ENCODE measurements at regions of chr21 and their contacts with region 1.

Region 1: DNA sequence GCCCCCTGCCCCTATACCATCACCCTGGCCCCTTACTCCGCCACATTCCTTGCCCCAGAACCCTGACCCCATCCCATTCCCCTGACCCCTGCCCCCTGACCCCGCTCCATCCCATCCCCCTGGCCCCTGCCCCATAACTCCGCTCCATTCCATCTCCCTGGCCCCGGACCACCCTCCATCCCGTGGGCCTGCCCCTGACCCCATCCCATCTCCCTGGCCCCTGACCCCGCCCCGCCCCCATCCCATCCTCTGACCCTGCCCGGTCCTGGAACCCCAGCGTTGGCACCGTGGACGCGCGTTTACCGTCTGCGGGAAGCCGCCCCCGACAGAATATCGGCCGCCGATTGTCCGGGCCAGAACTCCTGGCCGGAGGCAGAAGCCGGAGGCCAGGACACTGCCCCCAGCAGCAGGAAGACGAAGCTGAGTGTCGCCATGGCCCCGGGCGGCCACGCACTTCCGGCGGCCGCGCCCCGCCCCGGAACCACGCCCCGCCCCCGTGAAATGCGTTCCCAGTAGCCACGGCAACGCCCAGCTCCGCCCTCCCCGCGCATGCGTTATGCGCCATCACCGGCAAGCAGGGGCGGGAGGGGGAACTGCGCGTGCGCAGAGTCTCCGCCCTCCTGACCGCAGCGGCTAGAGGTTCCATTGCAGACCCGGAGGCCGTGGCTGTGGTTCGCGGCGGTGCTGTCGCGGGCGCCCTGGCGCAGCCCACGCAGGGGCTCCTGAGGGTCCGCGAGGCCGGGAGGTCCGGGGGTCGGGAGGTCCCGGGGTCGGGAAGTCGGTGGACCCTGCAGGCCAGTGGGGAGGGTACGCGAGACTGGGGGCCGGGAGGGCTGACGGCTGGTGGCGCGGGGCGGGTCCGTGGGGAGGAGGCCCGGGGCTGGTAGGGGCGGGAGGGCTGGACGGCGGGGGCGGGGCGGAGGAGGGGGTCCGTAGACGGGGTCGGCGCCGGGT is at the start of gene POFUT2:
- DNase-seq: peak; percentile 97 to 100 (median 99)
- ATAC-seq: peak; percentile 77
- H3K4me3 ChIP-seq: peak within 1 kb of the TSS; percentile 69
- H3K4me3 Mint-ChIP-seq: peak within 1 kb of the TSS; percentile 98
- H3K27ac ChIP-seq: peak within 1 kb of the TSS; percentile 53 to 57
- H3K27ac Mint-ChIP-seq: peak within 1 kb of the TSS; percentile 92
- H3K4me1 ChIP-seq: peaks cover 37% of the 10 kb centered on the region
- H3K4me1 Mint-ChIP-seq: peaks cover 40% of the 10 kb centered on the region
- H3K27me3 ChIP-seq: no peaks in the 10 kb centered on the region
- H3K27me3 Mint-ChIP-seq: no peaks in the 10 kb centered on the region
- CTCF ChIP-seq: no peak
- total RNA-seq, gene POFUT2: 56.6 to 57.2 TPM

Region 2: DNA sequence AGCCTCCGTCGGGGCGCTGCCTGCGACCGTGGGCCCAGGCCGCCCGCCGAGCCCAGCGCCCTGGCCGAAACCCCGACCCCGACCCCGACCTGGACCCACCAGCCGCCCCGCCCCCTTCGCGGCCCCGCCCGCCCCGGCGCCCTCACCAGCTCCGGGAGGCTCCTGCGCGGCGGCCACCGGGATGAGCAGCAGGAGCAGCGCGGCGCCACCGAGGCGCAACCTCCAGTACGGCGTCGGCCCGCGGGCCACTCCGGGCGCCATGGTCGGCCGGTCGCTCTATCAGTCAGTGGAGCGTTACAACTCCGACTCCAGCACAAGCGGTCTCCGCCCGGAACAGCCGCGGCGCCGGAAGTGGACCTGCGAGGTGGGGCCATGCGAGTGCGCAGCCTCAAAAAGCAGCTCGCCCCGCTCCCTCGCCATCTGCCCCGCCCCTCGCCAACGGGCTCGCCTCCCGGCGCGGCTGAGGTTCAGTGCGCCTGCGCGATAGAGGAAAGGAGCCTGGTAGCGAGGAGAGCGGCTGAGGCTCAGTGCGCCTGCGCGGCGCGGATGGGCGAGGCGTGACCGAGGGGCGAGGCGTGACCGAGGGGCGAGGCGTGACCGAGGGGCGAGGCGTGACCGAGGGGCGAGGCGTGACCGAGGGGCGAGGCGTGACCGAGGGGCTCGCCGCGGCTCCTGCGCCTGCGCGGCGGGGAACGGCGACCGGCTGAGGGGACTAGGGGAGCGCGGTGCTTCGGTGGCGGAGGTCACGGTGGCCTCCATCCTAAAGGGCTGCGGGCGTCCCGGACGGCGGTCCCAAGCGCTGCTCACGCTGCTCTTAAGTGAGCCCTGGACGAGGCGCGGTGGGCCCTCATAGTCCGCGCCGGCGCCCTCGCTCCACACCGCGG is 414.1 kb before region 1 on chr21 and contains the start of gene PTTG1IP:
- CTCF ChIA-PET with region 1: no interaction called
- POLR2A ChIA-PET with region 1: no interaction called
- intact Hi-C with region 1: loop called in 1 of 2 experiments (anchors 10 kb)
- DNase-seq: peak; percentile 98 to 100 (median 99)
- ATAC-seq: peak; percentile 76
- H3K4me3 ChIP-seq: peak within 1 kb of the TSS; percentile 76
- H3K4me3 Mint-ChIP-seq: peak within 1 kb of the TSS; percentile 97
- H3K27ac ChIP-seq: peak within 1 kb of the TSS; percentile 78 to 81
- H3K27ac Mint-ChIP-seq: peak within 1 kb of the TSS; percentile 92
- H3K4me1 ChIP-seq: peaks cover 62% of the 10 kb centered on the region
- H3K4me1 Mint-ChIP-seq: peaks cover 60% of the 10 kb centered on the region
- H3K27me3 ChIP-seq: no peaks in the 10 kb centered on the region
- H3K27me3 Mint-ChIP-seq: no peaks in the 10 kb centered on the region
- CTCF ChIP-seq: no peak
- total RNA-seq, gene PTTG1IP: 99.0 to 99.5 TPM

Region 3: DNA sequence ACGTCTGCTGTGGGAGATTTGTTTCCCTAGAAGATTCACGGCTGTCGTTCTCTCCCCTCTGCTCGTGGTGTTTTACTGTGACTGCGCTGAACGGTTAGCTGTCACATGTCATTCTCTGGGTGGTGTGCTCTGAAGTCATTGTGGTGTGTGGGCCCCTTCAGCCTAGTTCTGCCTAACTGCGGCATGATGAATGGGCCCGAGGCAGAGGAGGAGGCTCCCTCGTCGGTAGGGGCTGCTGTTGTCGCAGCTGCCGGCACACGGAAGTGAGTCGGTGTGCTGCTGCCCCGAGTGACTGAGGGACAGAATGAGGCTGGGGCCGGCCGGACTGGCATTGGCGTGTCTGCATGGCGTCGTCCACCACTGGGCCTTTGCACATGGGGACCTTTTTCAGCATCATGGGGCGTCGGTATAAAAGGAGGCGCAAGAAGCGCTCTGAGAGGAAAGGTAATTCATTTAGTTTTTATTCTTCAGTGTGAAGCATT is 135.4 kb before region 1 on chr21:
- CTCF ChIA-PET with region 1: interaction called, 6 read pairs
- POLR2A ChIA-PET with region 1: no interaction called
- intact Hi-C with region 1: loop called (anchors 2 to 5 kb)
- DNase-seq: peak; percentile 36 to 85 (median 61)
- ATAC-seq: peak; percentile 85
- H3K4me3 ChIP-seq: no peak overlapping the region
- H3K4me3 Mint-ChIP-seq: peak overlapping the region; percentile 46
- H3K27ac ChIP-seq: no peak overlapping the region
- H3K27ac Mint-ChIP-seq: peak overlapping the region; percentile 73
- H3K4me1 ChIP-seq: peaks cover 31% of the 10 kb centered on the region
- H3K4me1 Mint-ChIP-seq: peaks cover 52% of the 10 kb centered on the region
- H3K27me3 ChIP-seq: no peaks in the 10 kb centered on the region
- H3K27me3 Mint-ChIP-seq: no peaks in the 10 kb centered on the region
- CTCF ChIP-seq: peak; percentile 69

Region 4: DNA sequence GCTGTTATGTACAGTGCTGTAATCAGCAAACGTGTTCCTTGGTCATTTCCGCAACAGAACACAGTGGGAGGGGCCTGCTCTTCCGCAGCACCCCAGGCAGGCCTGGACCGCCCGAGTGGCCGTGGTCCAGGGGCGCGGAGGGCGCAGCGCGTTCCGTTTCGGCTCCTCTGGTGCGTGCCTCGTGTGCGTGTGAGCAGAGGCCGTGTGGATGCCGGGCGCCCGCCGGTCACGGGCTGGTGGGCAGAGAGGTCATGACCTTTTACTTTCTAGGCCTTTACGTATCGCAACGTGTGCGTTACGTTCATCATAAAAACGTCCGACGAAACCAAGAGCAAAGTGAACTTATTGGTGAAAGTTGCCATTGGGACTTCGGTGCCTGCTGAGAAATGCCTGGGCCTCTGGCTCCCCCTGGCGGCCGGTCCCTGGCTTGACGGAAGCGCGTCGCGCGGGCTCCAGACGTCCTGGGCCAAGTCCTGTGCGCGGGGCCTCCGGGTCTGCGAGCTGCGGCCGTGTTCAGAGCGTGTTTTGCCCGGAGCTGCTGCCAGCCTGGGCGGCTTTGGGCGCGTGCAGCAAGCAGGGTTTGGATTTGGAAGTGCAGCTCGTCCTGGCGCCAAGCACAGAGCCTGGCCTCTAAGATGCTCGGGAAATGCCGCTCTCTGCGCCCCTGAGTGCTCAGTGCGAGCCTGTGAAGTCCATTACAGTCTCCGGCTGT is 151.6 kb after region 1 on chr21:
- CTCF ChIA-PET with region 1: interaction called, 8 read pairs
- POLR2A ChIA-PET with region 1: interaction called, 5 read pairs
- intact Hi-C with region 1: loop called (anchors 1 kb)
- DNase-seq: peak; percentile 73 to 92 (median 84)
- ATAC-seq: peak; percentile 85
- H3K4me3 ChIP-seq: peak overlapping the region; percentile 38
- H3K4me3 Mint-ChIP-seq: peak overlapping the region; percentile 74
- H3K27ac ChIP-seq: no peak overlapping the region
- H3K27ac Mint-ChIP-seq: peak overlapping the region; percentile 73
- H3K4me1 ChIP-seq: peaks cover 21% of the 10 kb centered on the region
- H3K4me1 Mint-ChIP-seq: peaks cover 21% of the 10 kb centered on the region
- H3K27me3 ChIP-seq: peaks cover 0 to 2% of the 10 kb centered on the region in 2 experiments
- H3K27me3 Mint-ChIP-seq: peaks cover 8% of the 10 kb centered on the region
- CTCF ChIP-seq: peak; percentile 91

Region 5: GRCh38 chr21:45596704-45597318 is 309.1 kb after region 1 on chr21:
- CTCF ChIA-PET with region 1: interaction called, 3 read pairs
- POLR2A ChIA-PET with region 1: interaction called, 3 read pairs
- intact Hi-C with region 1: loop called in 1 of 2 experiments (anchors 1 kb)
- DNase-seq: peak; percentile 79 to 93 (median 84)
- ATAC-seq: peak; percentile 65
- H3K4me3 ChIP-seq: no peak overlapping the region
- H3K4me3 Mint-ChIP-seq: no peak overlapping the region
- H3K27ac ChIP-seq: no peak overlapping the region
- H3K27ac Mint-ChIP-seq: peak overlapping the region; percentile 67
- H3K4me1 ChIP-seq: peaks cover 26% of the 10 kb centered on the region
- H3K4me1 Mint-ChIP-seq: peaks cover 19% of the 10 kb centered on the region
- H3K27me3 ChIP-seq: no peaks in the 10 kb centered on the region
- H3K27me3 Mint-ChIP-seq: no peaks in the 10 kb centered on the region
- CTCF ChIP-seq: peak; percentile 87

Region 6: GRCh38 chr21:45788637-45789506 is 501.2 kb after region 1 on chr21:
- CTCF ChIA-PET with region 1: no interaction called
- POLR2A ChIA-PET with region 1: no interaction called
- intact Hi-C with region 1: no loop called
- DNase-seq: no peak
- ATAC-seq: no peak
- H3K4me3 ChIP-seq: no peak overlapping the region
- H3K4me3 Mint-ChIP-seq: no peak overlapping the region
- H3K27ac ChIP-seq: no peak overlapping the region
- H3K27ac Mint-ChIP-seq: no peak overlapping the region
- H3K4me1 ChIP-seq: no peaks in the 10 kb centered on the region
- H3K4me1 Mint-ChIP-seq: no peaks in the 10 kb centered on the region
- H3K27me3 ChIP-seq: no peaks in the 10 kb centered on the region
- H3K27me3 Mint-ChIP-seq: no peaks in the 10 kb centered on the region
- CTCF ChIP-seq: no peak

Region 7: GRCh38 chr21:45820171-45821091 is 532.7 kb after region 1 on chr21:
- CTCF ChIA-PET with region 1: no interaction called
- POLR2A ChIA-PET with region 1: no interaction called
- intact Hi-C with region 1: loop called (anchors 1 to 2 kb)
- DNase-seq: peak; percentile 73 to 90 (median 76)
- ATAC-seq: peak; percentile 66
- H3K4me3 ChIP-seq: no peak overlapping the region
- H3K4me3 Mint-ChIP-seq: no peak overlapping the region
- H3K27ac ChIP-seq: no peak overlapping the region
- H3K27ac Mint-ChIP-seq: peak overlapping the region; percentile 28
- H3K4me1 ChIP-seq: peaks cover 17% of the 10 kb centered on the region
- H3K4me1 Mint-ChIP-seq: peaks cover 25% of the 10 kb centered on the region
- H3K27me3 ChIP-seq: no peaks in the 10 kb centered on the region
- H3K27me3 Mint-ChIP-seq: no peaks in the 10 kb centered on the region
- CTCF ChIP-seq: peak; percentile 91

Region 8: DNA sequence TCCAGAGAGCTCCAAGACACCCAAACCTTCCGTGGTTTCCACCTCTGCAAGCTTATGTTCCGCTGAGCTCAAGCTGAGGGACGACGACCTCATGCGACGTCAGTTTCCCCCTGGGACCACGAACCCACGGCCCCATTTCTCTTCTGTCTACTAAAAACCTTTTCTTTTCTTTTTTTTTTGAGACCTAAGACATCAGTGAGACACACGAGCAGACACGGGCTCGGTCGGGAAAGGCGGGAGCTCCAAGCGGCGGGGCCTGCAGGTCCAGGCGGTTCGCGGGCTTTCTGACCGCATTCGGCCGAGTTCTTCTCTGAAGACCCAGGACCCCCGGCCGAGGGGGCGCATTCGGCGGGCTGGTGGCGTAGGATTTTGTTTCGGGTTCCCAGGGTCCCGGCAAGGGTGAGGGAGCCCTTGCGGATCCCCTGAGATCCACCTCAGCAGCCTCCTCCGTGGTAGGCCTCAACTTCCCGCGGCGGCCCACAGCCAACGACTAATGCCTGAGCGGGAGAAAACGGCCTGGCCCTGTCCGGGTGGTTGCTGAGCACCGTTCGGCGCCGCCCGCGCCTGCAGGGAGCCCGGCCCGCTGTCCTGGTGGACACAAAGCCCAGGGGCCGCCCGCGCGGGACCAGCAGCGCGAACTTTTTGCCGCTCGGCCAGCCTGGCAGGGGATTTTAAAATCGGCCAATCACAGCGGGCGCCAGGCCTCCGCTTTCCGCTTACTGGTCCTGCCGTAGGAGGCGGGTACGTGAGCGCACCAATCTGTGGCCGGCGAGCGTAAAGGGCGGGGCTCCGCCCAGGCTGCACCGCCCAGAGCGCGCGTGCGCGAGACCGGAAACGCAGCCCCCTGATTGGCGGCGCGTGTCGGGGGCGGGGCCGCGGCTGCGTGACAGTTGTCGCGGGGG is 1035.8 kb after region 1 on chr21 and contains the start of gene C21orf58:
- CTCF ChIA-PET with region 1: no interaction called
- POLR2A ChIA-PET with region 1: no interaction called
- intact Hi-C with region 1: loop called in 1 of 2 experiments (anchors 10 kb)
- DNase-seq: peak; percentile 95 to 99 (median 98)
- ATAC-seq: peak; percentile 81
- H3K4me3 ChIP-seq: peak within 1 kb of the TSS; percentile 96
- H3K4me3 Mint-ChIP-seq: peak within 1 kb of the TSS; percentile 96
- H3K27ac ChIP-seq: peak within 1 kb of the TSS; percentile 96 to 100
- H3K27ac Mint-ChIP-seq: peak within 1 kb of the TSS; percentile 99
- H3K4me1 ChIP-seq: peaks cover 28% of the 10 kb centered on the region
- H3K4me1 Mint-ChIP-seq: peaks cover 39% of the 10 kb centered on the region
- H3K27me3 ChIP-seq: no peaks in the 10 kb centered on the region
- H3K27me3 Mint-ChIP-seq: no peaks in the 10 kb centered on the region
- CTCF ChIP-seq: no peak
- total RNA-seq, gene C21orf58: 2.0 to 2.8 TPM

Measured in CD4-positive, alpha-beta T cell (primary cell).